Activated CD4-positive, alpha-beta T cell treated with anti-CD3 and anti-CD28 coated beads, Interleukin-2, amount 10 ng/mL, durations not matched to agents 7 days and 5 days (primary cell): ENCODE measurements at regions of chr6 and their contacts with region 1.

Region 1: GRCh38 chr6:135145063-135145800 is 35.9 kb upstream of the MYB start:
- DNase-seq: peak; percentile 47
- H3K4me3 Mint-ChIP-seq: peak overlapping the region; percentile 51
- H3K27ac Mint-ChIP-seq: peak overlapping the region; percentile 87
- H3K4me1 Mint-ChIP-seq: peaks cover 69% of the 10 kb centered on the region
- H3K27me3 Mint-ChIP-seq: no peaks in the 10 kb centered on the region

Region 2: GRCh38 chr6:135106611-135107010 is 38.6 kb before region 1 on chr6:
- CTCF ChIA-PET with region 1: no interaction called
- POLR2A ChIA-PET with region 1: no interaction called
- DNase-seq: no peak
- H3K4me3 Mint-ChIP-seq: no peak overlapping the region
- H3K27ac Mint-ChIP-seq: no peak overlapping the region
- H3K4me1 Mint-ChIP-seq: peaks cover 37% of the 10 kb centered on the region
- H3K27me3 Mint-ChIP-seq: no peaks in the 10 kb centered on the region

Region 3: DNA sequence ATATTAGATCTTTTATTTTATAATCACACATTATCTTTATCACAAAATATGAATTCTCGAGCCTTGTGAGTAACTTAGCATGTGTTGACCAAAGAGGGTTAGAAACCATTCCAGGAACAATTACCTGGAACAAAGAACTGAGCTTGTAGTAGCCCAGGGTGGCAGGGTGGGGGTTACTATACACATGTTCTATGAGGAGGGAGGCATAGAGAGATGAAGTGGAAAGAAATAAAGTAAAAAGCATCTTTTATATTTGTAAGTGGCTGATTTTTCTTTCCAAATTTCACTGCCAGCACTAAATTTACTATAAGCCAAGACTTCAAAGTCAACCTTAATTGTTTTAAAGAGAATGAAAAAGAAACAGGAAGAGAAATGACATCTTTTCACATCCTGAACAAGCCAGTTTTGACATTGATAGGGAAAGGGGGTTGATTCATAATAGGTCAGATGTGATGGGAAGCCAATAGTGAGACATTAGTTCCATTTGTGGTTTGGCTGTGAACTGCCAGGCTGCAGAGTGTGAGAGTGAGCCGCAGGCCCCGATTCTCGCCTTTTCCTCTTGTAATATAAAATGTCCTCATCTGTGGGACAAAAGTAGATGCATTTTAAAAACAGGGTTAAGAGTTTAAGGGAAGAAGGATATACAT is 16.8 kb before region 1 on chr6:
- CTCF ChIA-PET with region 1: interaction called, 18 read pairs
- POLR2A ChIA-PET with region 1: interaction called, 3 read pairs
- DNase-seq: peak; percentile 55
- H3K4me3 Mint-ChIP-seq: peak overlapping the region; percentile 47
- H3K27ac Mint-ChIP-seq: peak overlapping the region; percentile 96
- H3K4me1 Mint-ChIP-seq: peaks cover 36% of the 10 kb centered on the region
- H3K27me3 Mint-ChIP-seq: no peaks in the 10 kb centered on the region

Region 4: DNA sequence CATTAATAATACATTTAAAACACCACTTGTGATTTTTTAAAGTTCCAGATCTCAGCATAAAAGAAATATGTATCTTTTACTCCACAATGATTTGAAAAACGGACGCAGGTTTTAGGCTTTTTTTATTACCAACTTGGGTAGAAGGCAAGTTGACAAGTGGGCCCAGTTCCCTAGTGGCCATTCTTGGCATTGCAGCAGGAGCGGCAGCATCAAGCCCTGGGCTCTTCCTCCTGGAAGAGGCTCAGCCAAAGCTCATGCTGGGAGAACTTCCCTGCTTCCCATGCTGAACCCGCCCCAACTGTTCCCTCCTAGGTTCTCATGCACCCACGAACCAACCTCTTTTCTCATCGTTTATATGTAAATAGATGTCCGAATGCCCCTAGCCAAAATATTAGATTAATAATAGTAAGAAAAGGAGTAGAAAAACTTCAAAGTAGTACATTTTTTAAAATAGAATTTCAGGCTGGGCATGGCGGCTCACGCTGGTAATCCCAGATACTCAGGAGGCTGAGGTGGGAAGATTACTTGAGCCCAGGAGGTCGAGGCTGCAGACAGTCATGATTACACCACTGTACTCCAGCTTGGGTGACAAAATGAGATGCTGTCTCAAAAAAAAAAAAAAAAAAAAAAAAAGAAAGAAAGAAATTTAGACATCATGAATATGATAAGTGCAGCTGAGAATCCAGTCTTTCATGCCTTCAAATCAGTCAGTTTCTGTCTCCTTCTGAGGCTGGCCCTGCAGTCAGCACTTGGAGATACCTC is 17.6 kb after region 1 on chr6:
- CTCF ChIA-PET with region 1: interaction called, 25 read pairs
- POLR2A ChIA-PET with region 1: no interaction called
- DNase-seq: peak; percentile 33
- H3K4me3 Mint-ChIP-seq: no peak overlapping the region
- H3K27ac Mint-ChIP-seq: peak overlapping the region; percentile 44
- H3K4me1 Mint-ChIP-seq: peaks cover 42% of the 10 kb centered on the region
- H3K27me3 Mint-ChIP-seq: no peaks in the 10 kb centered on the region

Region 5: GRCh38 chr6:135224037-135224647 is 78.9 kb after region 1 on chr6:
- CTCF ChIA-PET with region 1: no interaction called
- POLR2A ChIA-PET with region 1: interaction called, 10 read pairs
- DNase-seq: no peak
- H3K4me3 Mint-ChIP-seq: peak overlapping the region; percentile 68
- H3K27ac Mint-ChIP-seq: peak overlapping the region; percentile 95
- H3K4me1 Mint-ChIP-seq: peaks cover 35% of the 10 kb centered on the region
- H3K27me3 Mint-ChIP-seq: no peaks in the 10 kb centered on the region